ENCODE measurements at regions of chr15 and their contacts with region 1.

Region 1: DNA sequence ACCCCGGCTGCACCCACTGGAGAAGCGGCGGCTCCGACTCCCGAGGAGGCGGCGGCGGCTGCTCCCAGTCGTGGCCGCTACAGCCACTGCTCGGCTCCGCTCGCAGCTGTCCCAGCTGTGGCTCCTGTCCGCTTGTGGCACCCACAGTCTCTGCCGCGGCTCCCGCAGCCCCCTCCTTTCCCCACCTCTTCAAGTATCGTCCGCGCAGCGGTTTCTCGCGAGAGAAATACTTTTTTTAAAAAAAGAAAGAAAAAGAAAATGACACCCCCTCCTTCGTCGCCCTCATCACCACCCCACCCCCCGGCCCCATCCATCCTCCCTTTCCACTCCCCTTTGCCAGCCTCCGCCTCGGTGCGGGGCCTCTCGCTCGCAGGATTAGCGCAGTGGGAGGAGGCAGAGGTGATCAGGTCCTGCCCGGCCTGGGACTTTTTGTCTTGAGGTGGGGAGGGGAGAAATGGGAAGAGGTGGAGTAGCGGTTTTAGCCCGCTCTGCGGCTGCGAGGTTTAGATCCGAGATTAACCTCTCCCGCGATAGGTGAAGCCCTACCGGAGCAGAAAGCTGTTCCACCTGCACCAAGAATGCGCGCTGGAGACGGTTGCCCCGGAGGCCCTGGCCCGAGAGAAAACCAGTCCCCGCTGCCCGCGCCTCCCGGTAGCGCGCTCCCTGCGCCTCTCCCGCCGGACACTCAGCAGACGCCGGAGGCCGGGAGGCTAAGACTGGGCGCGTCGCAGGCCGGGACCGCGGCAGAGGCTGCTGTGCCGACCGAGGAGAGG is at the start of gene FBN1:
- DNase-seq: peak; percentile 74 to 80 (median 78)
- ATAC-seq: peak; percentile 70 to 89 (median 87)
- H3K4me3 ChIP-seq: peak within 1 kb of the TSS; percentile 67 to 96 (median 88)
- H3K27ac ChIP-seq: peak within 1 kb of the TSS; percentile 83 to 94 (median 86)
- H3K4me1 ChIP-seq: peaks cover 0 to 40% (median 8%) of the 10 kb centered on the region in 12 donors
- H3K27me3 ChIP-seq: peaks cover 0 to 36% (median 0%) of the 10 kb centered on the region in 9 donors
- CTCF ChIP-seq: no peak
- POLR2A ChIP-seq: peak; percentile 16 to 74
- total RNA-seq, gene FBN1: 22.5 to 115 (median 38.9) TPM

Region 2: DNA sequence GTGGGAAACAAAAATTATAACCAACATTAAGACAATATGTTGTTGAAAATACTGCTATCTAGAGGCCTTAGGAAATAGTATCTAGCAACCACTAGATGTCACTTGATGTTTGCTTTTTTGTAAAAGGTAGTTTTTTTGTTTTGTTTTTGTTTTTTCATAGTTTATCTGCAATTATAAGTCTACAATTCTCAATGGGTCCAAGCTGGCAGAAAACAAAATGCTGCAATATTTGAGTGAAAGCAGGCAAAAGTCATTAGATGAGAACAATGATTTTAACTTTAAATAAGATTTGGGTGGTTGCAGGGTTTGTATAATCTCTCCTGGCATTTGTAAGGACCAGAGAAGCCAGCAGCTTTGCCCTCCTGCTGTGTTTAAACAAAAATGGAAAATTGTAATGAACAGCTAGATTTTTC is 287.5 kb before region 1 on chr15:
- intact Hi-C with region 1: loop called in 6 of 10 experiments (anchors 5 to 10 kb)
- DNase-seq: no peak
- ATAC-seq: peak in 1 of 4 donors; percentile 62
- H3K4me3 ChIP-seq: peak overlapping the region in 1 of 12 donors; percentile 3
- H3K27ac ChIP-seq: peak overlapping the region in 8 of 12 donors; percentile 3 to 53 (median 25)
- H3K4me1 ChIP-seq: peaks cover 0 to 20% (median 3%) of the 10 kb centered on the region in 12 donors
- H3K27me3 ChIP-seq: no peaks in the 10 kb centered on the region
- CTCF ChIP-seq: peak; percentile 38 to 75 (median 60)
- POLR2A ChIP-seq: no peak

Region 3: GRCh38 chr15:48507416-48508065 is 138.2 kb before region 1 on chr15:
- intact Hi-C with region 1: loop called in 8 of 10 experiments (anchors 5 to 10 kb)
- DNase-seq: no peak
- ATAC-seq: peak in 2 of 4 donors; percentile 39 to 55
- H3K4me3 ChIP-seq: no peak overlapping the region
- H3K27ac ChIP-seq: no peak overlapping the region
- H3K4me1 ChIP-seq: peaks cover 0 to 16% (median 0%) of the 10 kb centered on the region in 12 donors
- H3K27me3 ChIP-seq: no peaks in the 10 kb centered on the region
- CTCF ChIP-seq: peak; percentile 38 to 63 (median 50)
- POLR2A ChIP-seq: no peak

Region 4: GRCh38 chr15:48582452-48583247 is 63.1 kb before region 1 on chr15:
- intact Hi-C with region 1: loop called in 2 of 10 experiments (anchors 10 kb)
- DNase-seq: peak in 1 of 5 donors; percentile 35
- ATAC-seq: peak in 1 of 4 donors; percentile 42
- H3K4me3 ChIP-seq: no peak overlapping the region
- H3K27ac ChIP-seq: peak overlapping the region in 3 of 12 donors; percentile 1 to 46 (median 22)
- H3K4me1 ChIP-seq: peaks cover 0 to 72% (median 15%) of the 10 kb centered on the region in 12 donors
- H3K27me3 ChIP-seq: no peaks in the 10 kb centered on the region
- CTCF ChIP-seq: no peak
- POLR2A ChIP-seq: no peak

Region 5: DNA sequence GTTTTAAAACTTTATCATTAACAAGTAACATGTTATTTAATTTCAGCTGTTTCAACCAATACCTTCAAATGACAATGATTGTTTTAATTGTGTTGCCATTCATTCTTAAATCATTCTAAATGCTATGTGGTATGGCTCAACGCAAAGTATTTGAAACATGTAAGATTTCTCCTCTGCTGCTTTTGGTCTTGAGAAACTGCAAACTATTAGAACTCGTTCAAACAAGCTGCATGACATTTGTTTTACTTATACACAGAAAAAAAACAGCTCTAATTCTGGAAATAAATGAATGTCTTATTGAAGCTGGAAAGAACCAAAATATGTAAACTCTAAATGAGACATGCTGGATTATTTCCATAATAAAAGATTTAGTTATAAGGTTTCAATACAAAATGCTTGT is 29.5 kb before region 1 on chr15:
- intact Hi-C with region 1: no loop called
- DNase-seq: no peak
- ATAC-seq: no peak
- H3K4me3 ChIP-seq: no peak overlapping the region
- H3K27ac ChIP-seq: no peak overlapping the region
- H3K4me1 ChIP-seq: peaks cover 0 to 61% (median 4%) of the 10 kb centered on the region in 12 donors
- H3K27me3 ChIP-seq: no peaks in the 10 kb centered on the region
- CTCF ChIP-seq: no peak
- POLR2A ChIP-seq: no peak

Region 6: GRCh38 chr15:48794697-48795134 is 149.0 kb after region 1 on chr15:
- intact Hi-C with region 1: loop called in 2 of 10 experiments (anchors 10 kb)
- DNase-seq: no peak
- ATAC-seq: peak in 3 of 4 donors; percentile 52 to 60 (median 58)
- H3K4me3 ChIP-seq: peak overlapping the region in 3 of 12 donors; percentile 2 to 26 (median 7)
- H3K27ac ChIP-seq: peak overlapping the region in 3 of 12 donors; percentile 6 to 88 (median 16)
- H3K4me1 ChIP-seq: peaks cover 0 to 20% (median 0%) of the 10 kb centered on the region in 12 donors
- H3K27me3 ChIP-seq: no peaks in the 10 kb centered on the region
- CTCF ChIP-seq: no peak
- POLR2A ChIP-seq: no peak

Measured in heart left ventricle (tissue), 16 donors.